GM10248 (cell line): ENCODE measurements at regions of chr17 and their contacts with region 1.

Region 1: GRCh38 chr17:68398691-68399637 is 58.3 kb downstream of the WIPI1 start:
- DNase-seq: peak; percentile 88
- CTCF ChIP-seq: peak; percentile 74

Region 2: DNA sequence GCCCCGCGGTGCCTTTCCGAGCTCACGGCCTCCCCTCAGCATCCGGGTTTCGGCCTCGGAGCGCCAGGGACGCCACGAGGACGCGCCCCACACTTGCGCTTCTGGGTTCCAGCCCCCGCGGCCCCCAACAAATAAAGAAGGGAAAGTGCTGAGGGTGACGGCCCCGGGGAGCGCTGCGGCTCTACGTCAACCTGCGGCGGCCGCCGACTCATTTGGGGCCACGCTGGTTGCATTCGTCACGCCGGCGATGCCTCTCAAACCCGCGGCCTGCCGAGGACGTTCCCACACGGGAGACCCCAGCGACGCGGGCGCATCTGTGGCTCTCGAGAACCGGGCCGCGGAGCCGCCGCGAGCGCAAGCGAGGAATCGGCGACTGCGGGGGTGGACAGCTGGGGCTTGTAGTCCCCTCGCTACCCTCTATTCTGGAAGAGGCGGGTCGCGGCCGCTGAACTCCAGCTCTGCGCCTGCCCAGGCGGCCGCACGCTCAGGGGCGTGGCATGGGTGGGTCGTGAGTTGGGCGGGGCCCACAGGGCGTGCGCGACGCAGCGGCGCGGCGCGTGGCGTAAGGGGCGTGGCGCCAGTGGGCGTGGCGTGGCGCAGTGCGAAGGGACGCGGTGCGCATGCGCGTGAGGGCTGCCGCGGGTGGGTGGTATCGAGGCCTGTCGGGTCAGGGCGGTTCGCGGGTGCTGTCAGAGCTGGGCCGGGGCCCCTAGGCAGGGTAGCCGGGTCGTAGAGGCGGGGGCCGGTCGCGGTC is 151.3 kb before region 1 on chr17 and contains the start of gene AMZ2:
- CTCF ChIA-PET with region 1: interaction called, 15 read pairs
- POLR2A ChIA-PET with region 1: no interaction called
- DNase-seq: peak; percentile 95
- CTCF ChIP-seq: no peak

Region 3: GRCh38 chr17:68356520-68356919 is 42.4 kb before region 1 on chr17:
- CTCF ChIA-PET with region 1: interaction called, 10 read pairs
- POLR2A ChIA-PET with region 1: no interaction called
- DNase-seq: peak; percentile 50
- CTCF ChIP-seq: no peak

Region 4: GRCh38 chr17:68387812-68388557 is 11.0 kb before region 1 on chr17:
- CTCF ChIA-PET with region 1: interaction called, 17 read pairs
- POLR2A ChIA-PET with region 1: no interaction called
- DNase-seq: no peak
- CTCF ChIP-seq: no peak

Region 5: GRCh38 chr17:68424942-68425386 is 26.0 kb after region 1 on chr17:
- CTCF ChIA-PET with region 1: interaction called, 12 read pairs
- POLR2A ChIA-PET with region 1: no interaction called
- DNase-seq: no peak
- CTCF ChIP-seq: no peak

Region 6: GRCh38 chr17:68600067-68600930 is 201.3 kb after region 1 on chr17:
- CTCF ChIA-PET with region 1: no interaction called
- POLR2A ChIA-PET with region 1: no interaction called
- DNase-seq: no peak
- CTCF ChIP-seq: peak; percentile 7